ENCODE measurements at regions of chr2 and their contacts with region 1.

Region 1: DNA sequence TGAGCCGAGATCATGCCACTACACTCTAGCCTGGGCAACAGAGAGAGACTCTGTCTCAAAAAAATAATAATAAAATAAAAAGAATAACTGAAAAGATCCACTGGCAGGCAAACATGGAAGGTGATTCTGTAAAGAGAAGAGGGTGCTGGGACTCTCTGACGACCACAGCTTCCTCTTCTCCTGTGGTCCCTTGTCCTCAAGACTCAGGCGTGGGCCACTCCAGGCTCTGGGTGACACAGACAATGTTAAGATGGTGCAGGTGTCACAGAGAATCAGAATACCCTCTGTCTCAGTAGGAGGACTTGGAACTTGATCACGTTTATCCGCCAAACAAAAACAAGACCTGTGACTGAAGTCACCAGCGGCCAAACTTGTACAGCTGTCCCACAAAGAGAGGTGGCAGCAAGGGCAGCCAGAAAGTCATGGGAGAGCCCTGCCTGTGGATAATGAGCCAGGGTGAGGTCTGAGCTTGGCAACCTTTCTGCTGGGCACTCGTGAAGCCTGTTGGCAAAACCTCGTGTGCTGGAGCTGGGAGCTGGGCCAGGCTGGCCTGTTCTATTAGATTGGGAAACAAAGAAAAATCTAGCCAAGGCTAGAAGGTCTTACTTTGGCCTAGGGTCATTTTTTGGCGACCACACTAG is 76.4 kb upstream of the ITGA6 start:
- DNase-seq: peak; percentile 70 to 90
- ATAC-seq: peak; percentile 98 to 100 (median 99)
- H3K4me3 ChIP-seq: no peak overlapping the region
- H3K27ac ChIP-seq: peak overlapping the region; percentile 75
- H3K4me1 ChIP-seq: peaks cover 8% of the 10 kb centered on the region
- H3K27me3 ChIP-seq: no peaks in the 10 kb centered on the region
- CTCF ChIP-seq: no peak

Region 2: DNA sequence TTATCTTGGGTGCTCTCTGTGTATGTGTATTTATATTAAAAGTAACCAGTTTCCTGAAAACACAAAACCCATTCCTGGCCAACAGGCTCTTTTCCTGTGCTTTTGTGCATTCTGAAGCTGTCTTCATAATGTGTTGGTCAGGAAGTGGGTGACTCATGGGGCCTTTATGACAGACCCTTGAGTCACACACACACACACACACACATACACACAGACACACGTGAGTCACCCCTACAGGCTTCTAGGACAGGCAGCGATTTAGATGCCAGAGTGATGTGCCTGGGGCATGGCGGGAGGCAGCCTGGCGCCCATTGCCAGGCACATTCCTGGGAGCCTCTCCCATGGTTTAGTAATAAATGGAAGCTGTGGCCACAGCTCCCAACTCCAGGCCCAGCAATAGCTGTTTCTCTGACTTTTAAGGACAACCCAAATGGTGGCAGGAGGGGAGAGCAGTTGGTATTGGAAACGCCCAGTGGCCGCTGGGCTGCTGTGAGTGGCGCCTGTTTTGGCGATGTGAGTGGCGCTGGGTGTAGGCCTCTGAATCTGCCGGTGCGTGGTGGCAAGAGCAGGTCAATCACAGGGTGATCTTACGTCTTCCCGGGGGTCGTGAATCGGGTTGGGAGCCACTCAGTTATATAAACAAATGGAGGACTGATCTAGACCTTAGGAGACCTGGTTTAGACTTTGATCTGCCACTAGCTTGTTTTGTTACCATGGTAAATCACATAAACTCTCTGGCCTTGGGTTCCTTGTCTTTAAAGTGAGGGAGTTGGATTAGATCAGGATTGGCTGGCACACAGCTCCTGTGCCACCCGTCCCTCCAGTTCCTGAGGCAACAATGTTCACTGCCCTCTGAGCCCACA is 97.5 kb before region 1 on chr2:
- intact Hi-C with region 1: no loop called
- DNase-seq: peak; percentile 51 to 52
- ATAC-seq: peak; percentile 63 to 87 (median 82)
- H3K4me3 ChIP-seq: no peak overlapping the region
- H3K27ac ChIP-seq: peak overlapping the region; percentile 58
- H3K4me1 ChIP-seq: no peaks in the 10 kb centered on the region
- H3K27me3 ChIP-seq: no peaks in the 10 kb centered on the region
- CTCF ChIP-seq: no peak

Region 3: DNA sequence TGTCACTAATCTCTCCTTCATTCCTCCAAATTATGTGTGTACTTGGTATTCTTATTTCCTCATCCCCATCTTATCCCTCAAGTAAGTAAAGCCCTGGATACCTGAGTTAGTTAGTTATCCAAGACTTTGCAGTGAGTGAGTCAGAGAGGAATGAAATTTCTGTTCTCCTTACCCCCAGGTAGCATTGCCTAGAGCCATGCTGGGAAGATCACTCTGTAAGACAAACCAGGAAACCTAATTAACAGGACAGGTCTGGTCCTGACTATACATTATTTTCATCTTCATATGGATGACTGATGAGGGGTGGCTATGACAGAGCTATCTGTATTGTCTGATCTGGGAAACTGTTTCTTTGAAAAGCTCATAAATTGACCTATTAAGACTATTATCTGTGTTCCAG is 21.5 kb after region 1 on chr2:
- intact Hi-C with region 1: no loop called
- DNase-seq: no peak
- ATAC-seq: no peak
- H3K4me3 ChIP-seq: no peak overlapping the region
- H3K27ac ChIP-seq: no peak overlapping the region
- H3K4me1 ChIP-seq: peaks cover 6% of the 10 kb centered on the region
- H3K27me3 ChIP-seq: no peaks in the 10 kb centered on the region
- CTCF ChIP-seq: no peak

Region 4: GRCh38 chr2:172427256-172427989 is 76.5 kb after region 1 on chr2 and contains the start of gene ITGA6:
- intact Hi-C with region 1: loop called in 1 of 2 experiments (anchors 5 kb)
- DNase-seq: peak; percentile 69 to 78
- ATAC-seq: peak; percentile 76 to 85 (median 82)
- H3K4me3 ChIP-seq: peak within 1 kb of the TSS; percentile 94
- H3K27ac ChIP-seq: peak within 1 kb of the TSS; percentile 86
- H3K4me1 ChIP-seq: peaks cover 26% of the 10 kb centered on the region
- H3K27me3 ChIP-seq: no peaks in the 10 kb centered on the region
- CTCF ChIP-seq: peak; percentile 23
- total RNA-seq, gene ITGA6: 25.9 to 46.5 (median 43.8) TPM